Activated CD8-positive, alpha-beta T cell treated with anti-CD3 and anti-CD28 coated beads for 36 hours (primary cell): ENCODE measurements at regions of chr16 and their contacts with region 1.

Region 1: DNA sequence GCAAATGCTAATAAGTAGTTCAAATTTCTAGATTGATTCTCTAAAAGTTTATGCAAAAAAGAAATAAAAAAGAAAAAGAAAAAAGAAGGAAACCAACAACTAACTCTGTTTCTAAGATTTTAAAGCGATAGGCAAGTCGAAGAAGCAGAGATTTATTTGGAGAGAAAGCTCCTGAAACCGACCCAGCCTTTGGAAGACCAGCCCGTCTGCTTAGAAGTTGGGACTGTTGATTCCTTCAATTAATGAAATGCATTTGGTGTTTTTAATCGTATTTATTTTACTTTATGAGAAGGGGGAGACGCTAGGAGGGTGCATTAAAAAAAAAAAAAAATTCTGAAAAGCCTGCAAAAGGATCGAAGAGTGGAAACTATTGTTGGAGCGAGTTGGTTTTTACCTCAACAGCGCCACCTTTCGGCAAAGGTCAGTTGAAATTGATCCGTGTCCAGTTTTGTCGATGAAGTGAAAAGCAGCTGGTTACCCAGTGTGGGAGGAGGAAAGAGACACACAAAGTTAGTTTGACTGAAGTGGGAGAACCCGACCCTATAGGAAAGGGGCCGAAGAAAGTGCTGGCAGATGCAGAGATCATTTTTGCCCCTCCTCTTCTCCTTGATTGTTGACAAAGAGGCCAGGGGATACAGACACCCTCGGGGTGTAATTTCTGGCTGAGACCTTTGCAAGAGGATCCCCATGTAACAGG is 1.5 kb upstream of the MAF start:
- DNase-seq: peak; percentile 86
- ATAC-seq: peak; percentile 24
- H3K4me3 Mint-ChIP-seq: peak overlapping the region; percentile 78
- H3K27ac Mint-ChIP-seq: peak overlapping the region; percentile 79
- H3K4me1 Mint-ChIP-seq: peaks cover 28% of the 10 kb centered on the region
- H3K27me3 Mint-ChIP-seq: peaks cover 48% of the 10 kb centered on the region
- CTCF ChIP-seq: peak; percentile 81

Region 2: GRCh38 chr16:78122774-78123315 is 1479.2 kb before region 1 on chr16:
- CTCF ChIA-PET with region 1: no interaction called
- POLR2A ChIA-PET with region 1: no interaction called
- intact Hi-C with region 1: loop called (anchors 10 kb)
- DNase-seq: peak; percentile 44
- ATAC-seq: peak; percentile 74
- H3K4me3 Mint-ChIP-seq: no peak overlapping the region
- H3K27ac Mint-ChIP-seq: no peak overlapping the region
- H3K4me1 Mint-ChIP-seq: peaks cover 2% of the 10 kb centered on the region
- H3K27me3 Mint-ChIP-seq: no peaks in the 10 kb centered on the region
- CTCF ChIP-seq: peak; percentile 73

Region 3: DNA sequence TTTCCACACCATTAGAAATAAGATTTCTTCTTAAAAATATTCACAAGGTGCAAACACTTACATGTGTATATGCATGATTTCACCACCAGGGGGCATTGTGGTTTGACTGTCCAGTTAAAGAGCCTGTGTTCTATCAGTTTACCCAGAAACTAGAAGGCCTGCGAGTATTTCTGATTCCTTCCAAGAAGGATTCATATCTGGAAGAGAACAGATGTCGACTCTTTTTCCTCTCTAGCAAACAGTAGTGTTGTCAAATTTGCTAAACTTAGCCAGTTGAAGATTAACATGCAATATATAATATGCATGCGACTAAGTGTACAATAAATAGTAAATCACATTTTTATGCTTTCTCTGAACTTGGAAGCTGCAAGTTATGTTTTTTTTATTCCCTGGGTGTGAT is 1098.5 kb before region 1 on chr16:
- CTCF ChIA-PET with region 1: no interaction called
- POLR2A ChIA-PET with region 1: no interaction called
- intact Hi-C with region 1: loop called (anchors 10 kb)
- DNase-seq: peak; percentile 64
- ATAC-seq: no peak
- H3K4me3 Mint-ChIP-seq: no peak overlapping the region
- H3K27ac Mint-ChIP-seq: no peak overlapping the region
- H3K4me1 Mint-ChIP-seq: no peaks in the 10 kb centered on the region
- H3K27me3 Mint-ChIP-seq: no peaks in the 10 kb centered on the region
- CTCF ChIP-seq: peak; percentile 93

Region 4: GRCh38 chr16:78705694-78706093 is 896.4 kb before region 1 on chr16:
- CTCF ChIA-PET with region 1: interaction called, 5 read pairs
- POLR2A ChIA-PET with region 1: no interaction called
- intact Hi-C with region 1: loop called (anchors 5 kb)
- DNase-seq: peak; percentile 16
- ATAC-seq: peak; percentile 87
- H3K4me3 Mint-ChIP-seq: no peak overlapping the region
- H3K27ac Mint-ChIP-seq: no peak overlapping the region
- H3K4me1 Mint-ChIP-seq: peaks cover 3% of the 10 kb centered on the region
- H3K27me3 Mint-ChIP-seq: no peaks in the 10 kb centered on the region
- CTCF ChIP-seq: peak; percentile 69

Region 5: DNA sequence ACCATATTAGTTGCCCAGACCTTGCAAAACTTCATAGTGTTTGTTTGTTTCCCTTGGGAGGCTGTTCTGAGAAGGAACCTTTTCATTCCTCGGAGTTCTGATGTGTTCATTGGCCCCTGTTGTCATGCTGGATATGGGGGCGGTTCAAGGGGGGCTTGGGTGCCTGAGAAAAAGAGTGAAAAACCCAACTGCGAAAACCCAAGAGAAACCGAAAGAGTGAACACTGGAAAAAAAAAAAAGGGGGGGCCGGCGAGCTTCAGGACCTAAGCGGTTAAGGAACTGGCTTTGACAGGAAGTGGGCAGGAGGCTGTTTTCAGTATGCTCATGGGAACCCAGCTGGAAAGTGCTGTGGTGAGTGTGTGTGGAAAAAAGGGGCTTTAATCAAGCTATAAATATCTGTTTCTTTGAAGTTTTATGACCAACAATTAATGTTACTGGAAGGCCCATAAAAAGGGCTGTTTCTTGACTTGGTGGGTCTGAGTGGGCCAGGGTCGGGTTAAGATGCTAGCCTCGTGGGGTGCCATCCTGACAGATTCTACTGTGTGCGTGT is 512.3 kb before region 1 on chr16:
- CTCF ChIA-PET with region 1: no interaction called
- POLR2A ChIA-PET with region 1: no interaction called
- intact Hi-C with region 1: loop called (anchors 10 kb)
- DNase-seq: peak; percentile 89
- ATAC-seq: peak; percentile 79
- H3K4me3 Mint-ChIP-seq: peak overlapping the region; percentile 49
- H3K27ac Mint-ChIP-seq: peak overlapping the region; percentile 89
- H3K4me1 Mint-ChIP-seq: peaks cover 53% of the 10 kb centered on the region
- H3K27me3 Mint-ChIP-seq: peaks cover 8% of the 10 kb centered on the region
- CTCF ChIP-seq: no peak

Region 6: DNA sequence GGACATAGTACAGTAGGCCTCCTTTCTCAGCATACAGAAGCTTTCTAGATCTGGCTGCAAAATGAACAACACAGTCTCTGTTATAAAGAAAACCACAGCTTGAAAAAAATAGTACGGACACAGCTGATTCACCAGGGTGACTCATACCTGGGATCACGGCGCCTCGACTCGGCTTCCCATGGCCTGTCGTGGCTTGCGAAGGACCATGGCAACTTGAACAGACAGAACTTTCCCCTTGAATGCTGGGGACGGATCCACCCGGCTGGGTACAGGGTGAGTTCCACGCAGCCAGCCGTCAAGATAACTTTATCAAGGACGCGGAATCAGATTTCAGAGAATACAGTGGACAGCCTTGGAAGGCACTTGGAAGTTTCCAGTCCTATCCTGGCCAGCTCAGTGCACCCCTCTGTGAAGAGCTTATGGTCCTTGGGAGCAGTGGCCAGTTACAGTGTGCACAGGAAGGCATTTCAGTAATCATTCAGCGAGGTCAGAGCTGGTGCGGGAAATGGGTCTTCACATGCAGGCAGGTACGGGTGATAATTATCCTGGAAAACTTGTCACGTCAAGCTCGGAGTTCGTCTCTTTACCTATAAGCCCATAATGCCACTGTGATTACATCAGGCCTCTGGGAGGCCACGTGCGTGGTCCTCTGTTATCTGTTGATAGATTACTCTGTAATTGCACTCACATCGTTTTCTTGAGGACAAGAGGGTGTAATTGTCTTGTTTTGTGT is 56.4 kb after region 1 on chr16:
- CTCF ChIA-PET with region 1: no interaction called
- POLR2A ChIA-PET with region 1: no interaction called
- intact Hi-C with region 1: no loop called
- DNase-seq: no peak
- ATAC-seq: no peak
- H3K4me3 Mint-ChIP-seq: no peak overlapping the region
- H3K27ac Mint-ChIP-seq: no peak overlapping the region
- H3K4me1 Mint-ChIP-seq: no peaks in the 10 kb centered on the region
- H3K27me3 Mint-ChIP-seq: no peaks in the 10 kb centered on the region
- CTCF ChIP-seq: no peak